Left lung (tissue), 14 donors: ENCODE measurements at regions of chr5 and their contacts with region 1.

Region 1: DNA sequence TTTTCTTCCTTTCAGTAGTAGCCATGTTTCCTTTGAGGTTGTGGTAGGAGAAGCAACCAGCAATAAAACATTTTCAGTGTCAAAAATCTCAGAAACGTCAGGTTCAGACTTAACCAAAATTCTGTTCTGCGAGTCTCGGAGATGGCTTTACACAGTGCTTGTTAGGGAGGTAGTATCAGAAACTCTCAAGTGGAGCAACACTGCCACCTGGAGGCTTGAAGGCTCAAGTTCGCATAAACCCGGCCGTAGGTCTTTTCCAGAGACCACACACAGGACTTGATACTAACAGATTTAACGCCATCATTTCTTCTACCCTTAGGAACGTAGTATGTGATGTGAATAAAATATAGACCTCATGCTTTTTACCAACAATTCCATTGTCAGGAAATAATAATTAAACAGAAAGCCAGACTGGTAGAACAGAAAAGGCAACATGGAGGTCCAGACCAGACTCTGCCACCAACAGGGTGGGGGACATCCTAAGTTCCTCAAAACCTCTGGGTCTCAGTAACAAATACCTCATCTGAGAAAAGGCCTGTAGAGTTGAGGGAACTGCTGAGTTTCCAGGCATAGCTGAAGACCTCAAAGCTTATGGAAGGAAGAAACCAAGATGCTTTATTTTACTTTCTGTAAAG is 8.5 kb downstream of the PTGER4 start:
- DNase-seq: peak; percentile 41 to 91 (median 80)
- ATAC-seq: peak; percentile 96
- H3K4me3 ChIP-seq: peak overlapping the region in 1 of 2 donors; percentile 78
- H3K27ac ChIP-seq: no peak overlapping the region
- H3K4me1 ChIP-seq: peaks cover 3 to 76% of the 10 kb centered on the region in 2 donors
- H3K27me3 ChIP-seq: no peaks in the 10 kb centered on the region
- CTCF ChIP-seq: peak; percentile 67 to 89

Region 2: GRCh38 chr5:39948867-39949468 is 739.3 kb before region 1 on chr5:
- intact Hi-C with region 1: loop called in 1 of 2 experiments (anchors 5 kb)
- DNase-seq: peak in 2 of 4 donors; percentile 42 to 74
- ATAC-seq: peak; percentile 93
- H3K4me3 ChIP-seq: no peak overlapping the region
- H3K27ac ChIP-seq: peak overlapping the region in 1 of 2 donors; percentile 71
- H3K4me1 ChIP-seq: peaks cover 0 to 18% of the 10 kb centered on the region in 2 donors
- H3K27me3 ChIP-seq: no peaks in the 10 kb centered on the region
- CTCF ChIP-seq: peak; percentile 57 to 73